A549 (cell line): ENCODE measurements at regions of chr5 and their contacts with region 1.

Region 1: GRCh38 chr5:5398046-5398445 is 24.4 kb upstream of the ICE1 start:
- DNase-seq: no peak
- ATAC-seq: no peak
- H3K4me3 ChIP-seq: no peak overlapping the region
- H3K27ac ChIP-seq: no peak overlapping the region
- H3K4me1 ChIP-seq: no peaks in the 10 kb centered on the region
- CTCF ChIP-seq: no peak
- EP300 ChIP-seq: no peak
- POLR2A ChIP-seq: no peak
- RAD21 ChIP-seq: no peak

Region 2: GRCh38 chr5:5141625-5142532 is 256.2 kb before region 1 on chr5:
- CTCF ChIA-PET with region 1: interaction called, 23 read pairs
- POLR2A ChIA-PET with region 1: no interaction called
- DNase-seq: peak in 1 of 2 experiments; percentile 71
- ATAC-seq: peak in 1 of 2 experiments; percentile 49; a peak in 3 of 6 replicates
- H3K4me3 ChIP-seq: no peak overlapping the region
- H3K27ac ChIP-seq: peak overlapping the region in 1 of 2 experiments; percentile 19; a peak in 1 of 6 replicates
- H3K4me1 ChIP-seq: peaks cover 7% of the 10 kb centered on the region; the same call in 1 of the 3 replicates
- CTCF ChIP-seq: peak; percentile 83
- EP300 ChIP-seq: no peak
- POLR2A ChIP-seq: no peak
- RAD21 ChIP-seq: peak; percentile 87 to 90

Region 3: DNA sequence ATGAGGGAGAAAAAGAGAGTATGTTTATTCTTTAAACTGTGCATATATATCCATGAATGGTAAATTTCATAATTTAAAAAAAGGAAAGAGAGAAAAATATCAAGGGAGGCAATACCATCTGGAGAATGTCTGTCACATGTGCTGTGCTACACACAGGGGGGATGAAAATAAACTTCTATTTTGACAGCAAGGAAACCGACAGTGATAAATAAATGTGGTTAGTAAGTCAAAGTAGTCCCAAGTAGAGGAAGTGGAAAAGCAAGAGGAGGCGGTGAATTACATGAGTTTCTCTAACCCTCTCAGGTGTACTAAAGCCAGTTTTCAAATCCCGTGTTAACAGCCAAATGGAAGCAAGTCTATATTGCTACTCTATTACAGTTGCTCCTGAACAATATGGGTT is 107.8 kb after region 1 on chr5:
- CTCF ChIA-PET with region 1: no interaction called
- POLR2A ChIA-PET with region 1: no interaction called
- DNase-seq: no peak
- ATAC-seq: no peak
- H3K4me3 ChIP-seq: no peak overlapping the region
- H3K27ac ChIP-seq: no peak overlapping the region
- H3K4me1 ChIP-seq: no peaks in the 10 kb centered on the region
- CTCF ChIP-seq: no peak
- EP300 ChIP-seq: no peak
- POLR2A ChIP-seq: no peak
- RAD21 ChIP-seq: no peak